Caki2 (cell line): ENCODE measurements at regions of chr1 and their contacts with region 1.

Region 1: DNA sequence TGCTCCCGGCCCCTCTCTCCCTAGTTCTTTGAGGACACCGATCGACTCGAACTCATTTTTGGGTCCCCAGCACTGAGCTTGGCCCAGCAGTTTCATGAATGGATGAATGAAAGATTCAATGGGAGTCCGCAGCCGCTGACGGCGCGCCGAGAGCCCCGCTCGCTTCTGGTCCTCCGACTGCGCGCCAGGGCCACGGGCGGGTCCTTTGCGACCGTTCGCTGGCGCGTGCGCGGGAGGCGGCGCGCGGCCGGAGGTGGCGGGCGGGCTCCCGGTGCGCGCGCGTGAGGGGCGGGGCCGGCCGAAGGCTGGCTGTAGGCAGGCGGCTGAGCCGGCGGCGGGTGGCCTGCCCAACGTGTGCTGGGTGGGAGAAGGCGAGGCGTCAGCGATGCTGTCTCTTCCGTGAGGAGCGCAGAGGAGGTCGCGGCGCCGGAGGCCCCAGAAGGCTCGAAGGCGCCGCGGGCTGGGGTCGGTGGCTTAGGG is at the start of gene MAST2:
- DNase-seq: peak; percentile 86
- total RNA-seq, gene MAST2: 25.5 and 27.5 TPM in 2 replicates

Region 2: GRCh38 chr1:45326627-45327623 is 476.4 kb before region 1 on chr1 and contains the start of gene HPDL:
- in situ Hi-C with region 1: no loop called
- DNase-seq: peak; percentile 33
- total RNA-seq, gene HPDL: 0.49 and 1.1 TPM in 2 replicates

Region 3: GRCh38 chr1:45686317-45687013 is 116.9 kb before region 1 on chr1 and contains the start of gene GPBP1L1:
- in situ Hi-C with region 1: loop called (anchors 25 kb)
- DNase-seq: peak; percentile 93
- total RNA-seq, gene GPBP1L1: 59.0 and 90.2 TPM in 2 replicates